ENCODE measurements at regions of chr1 and their contacts with region 1.

Region 1: GRCh38 chr1:226827968-226828513 is 42.4 kb upstream of the PSEN2 start:
- DNase-seq: peak; percentile 96
- H3K4me3 ChIP-seq: peak overlapping the region in 1 of 4 donors; percentile 19
- H3K27ac ChIP-seq: peak overlapping the region; percentile 77 to 86 (median 84)
- H3K4me1 ChIP-seq: peaks cover 8 to 17% (median 13%) of the 10 kb centered on the region in 4 donors
- H3K27me3 ChIP-seq: no peaks in the 10 kb centered on the region
- CTCF ChIP-seq: peak; percentile 93 to 98 (median 95)
- EP300 ChIP-seq: no peak
- POLR2A ChIP-seq: no peak

Region 2: DNA sequence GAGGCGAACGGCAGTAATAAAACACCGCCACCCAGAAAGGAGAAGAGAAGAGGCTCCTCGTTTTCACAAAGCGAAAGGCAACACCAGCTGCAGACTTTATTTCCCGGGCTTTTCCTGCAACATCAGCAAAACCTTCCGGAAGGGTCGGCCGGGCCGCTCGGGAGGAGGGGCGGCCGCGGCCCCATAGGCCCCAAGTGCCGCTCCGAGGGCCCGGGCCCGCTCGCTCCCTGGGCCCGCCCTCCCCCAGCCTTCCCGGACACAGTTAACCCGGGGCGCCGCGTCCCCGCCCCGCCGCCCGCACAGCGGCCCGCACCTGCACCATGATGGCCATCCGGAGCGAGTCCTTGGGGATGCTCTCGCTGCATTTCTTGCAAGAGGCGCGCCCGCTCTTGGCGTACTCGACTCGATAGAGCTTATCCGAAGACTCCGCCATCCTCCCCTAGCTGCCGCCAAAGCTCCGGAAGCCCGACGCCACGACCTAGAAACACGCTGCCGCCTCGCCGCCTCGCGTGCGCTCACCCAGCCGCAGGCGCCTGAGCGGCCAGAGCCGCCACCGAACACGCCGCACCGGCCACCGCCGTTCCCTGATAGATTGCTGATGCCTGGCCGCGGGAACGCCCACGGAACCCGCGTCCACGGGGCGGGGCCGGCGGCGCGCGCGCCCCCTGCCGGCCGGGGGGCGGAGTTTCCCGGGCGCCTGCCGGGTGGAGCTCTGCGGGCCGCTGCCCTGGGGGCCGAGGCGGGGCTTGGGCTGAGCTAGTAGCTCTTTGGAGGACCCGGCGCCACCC is 420.4 kb before region 1 on chr1 and contains the start of gene PARP1:
- in situ Hi-C with region 1: loop called in 2 of 4 experiments (anchors 25 kb)
- intact Hi-C with region 1: no loop called
- DNase-seq: peak; percentile 90
- H3K4me3 ChIP-seq: peak within 1 kb of the TSS; percentile 58 to 90 (median 76)
- H3K27ac ChIP-seq: peak within 1 kb of the TSS; percentile 85 to 95 (median 92)
- H3K4me1 ChIP-seq: peaks cover 17 to 45% (median 34%) of the 10 kb centered on the region in 4 donors
- H3K27me3 ChIP-seq: no peaks in the 10 kb centered on the region
- CTCF ChIP-seq: peak in 4 of 5 experiments; percentile 32 to 85 (median 74)
- EP300 ChIP-seq: no peak
- POLR2A ChIP-seq: peak; percentile 65
- total RNA-seq, gene PARP1: 23.2 to 74.4 (median 38.0) TPM

Region 3: DNA sequence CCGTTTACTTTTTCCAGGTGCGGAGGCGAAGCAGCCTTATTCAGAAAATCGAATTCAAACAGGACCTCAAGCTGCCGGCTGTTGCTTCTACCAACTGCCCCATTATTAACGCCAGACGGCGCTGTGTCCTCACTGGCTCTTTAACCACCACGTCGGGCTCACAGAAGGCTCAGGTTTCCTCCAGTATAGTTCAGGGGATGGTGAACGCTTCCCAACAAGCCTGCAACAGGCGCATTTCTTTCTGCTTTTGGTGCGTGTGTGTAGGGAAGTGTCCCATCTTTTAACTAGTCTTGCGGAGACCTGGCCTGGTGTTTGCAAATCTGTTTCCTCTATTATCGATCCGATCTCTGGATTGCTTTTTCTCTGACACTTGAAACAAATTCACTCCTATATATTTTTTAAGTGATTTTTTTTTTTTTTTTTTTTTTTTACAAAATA is 280.3 kb before region 1 on chr1:
- in situ Hi-C with region 1: no loop called
- intact Hi-C with region 1: loop called (anchors 5 kb)
- DNase-seq: peak; percentile 83
- H3K4me3 ChIP-seq: peak overlapping the region in 1 of 4 donors; percentile 65
- H3K27ac ChIP-seq: peak overlapping the region in 3 of 4 donors; percentile 17 to 81 (median 74)
- H3K4me1 ChIP-seq: peaks cover 8 to 52% (median 45%) of the 10 kb centered on the region in 4 donors
- H3K27me3 ChIP-seq: peaks cover 28% of the 10 kb centered on the region
- CTCF ChIP-seq: peak; percentile 76 to 91 (median 85)
- EP300 ChIP-seq: no peak
- POLR2A ChIP-seq: no peak

Region 4: DNA sequence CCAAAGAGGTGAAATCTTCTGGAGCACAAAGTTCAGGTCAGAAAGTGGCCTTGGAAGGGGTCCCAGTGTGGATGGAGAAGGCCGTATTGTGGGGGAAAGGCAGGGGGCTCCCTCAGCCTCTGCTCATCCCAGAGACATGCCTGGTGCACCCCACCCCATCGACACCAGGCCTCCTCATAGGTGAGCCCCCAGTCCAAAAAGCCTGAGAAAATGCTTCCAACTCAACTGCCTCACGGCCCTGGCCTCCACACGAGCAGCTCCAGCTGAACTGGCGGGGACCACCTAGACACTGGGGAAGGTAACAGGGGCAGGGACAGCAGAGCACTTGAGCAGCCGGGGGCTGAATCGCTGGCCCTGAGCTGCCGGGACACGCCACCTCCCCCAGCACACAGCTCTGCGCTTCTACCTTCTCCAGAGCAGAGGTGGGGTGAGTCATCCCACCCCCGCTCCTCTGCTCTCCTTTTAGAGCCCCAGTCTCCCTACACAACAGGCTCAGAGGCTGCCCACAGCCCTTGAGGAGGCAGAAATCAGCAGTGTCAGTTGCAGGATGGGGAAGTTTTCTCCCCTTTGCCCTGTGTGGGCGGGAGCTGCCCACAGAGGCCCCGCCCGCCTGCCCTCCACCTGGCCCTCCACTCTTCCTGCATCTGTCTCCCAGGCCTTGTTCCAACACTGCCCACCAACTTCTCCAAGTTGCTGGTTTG is 185.0 kb before region 1 on chr1:
- in situ Hi-C with region 1: loop called (anchors 5 to 10 kb)
- intact Hi-C with region 1: no loop called
- DNase-seq: no peak
- H3K4me3 ChIP-seq: no peak overlapping the region
- H3K27ac ChIP-seq: peak overlapping the region; percentile 11 to 67 (median 37)
- H3K4me1 ChIP-seq: peaks cover 24 to 42% (median 36%) of the 10 kb centered on the region in 4 donors
- H3K27me3 ChIP-seq: no peaks in the 10 kb centered on the region
- CTCF ChIP-seq: no peak
- EP300 ChIP-seq: no peak
- POLR2A ChIP-seq: no peak

Region 5: DNA sequence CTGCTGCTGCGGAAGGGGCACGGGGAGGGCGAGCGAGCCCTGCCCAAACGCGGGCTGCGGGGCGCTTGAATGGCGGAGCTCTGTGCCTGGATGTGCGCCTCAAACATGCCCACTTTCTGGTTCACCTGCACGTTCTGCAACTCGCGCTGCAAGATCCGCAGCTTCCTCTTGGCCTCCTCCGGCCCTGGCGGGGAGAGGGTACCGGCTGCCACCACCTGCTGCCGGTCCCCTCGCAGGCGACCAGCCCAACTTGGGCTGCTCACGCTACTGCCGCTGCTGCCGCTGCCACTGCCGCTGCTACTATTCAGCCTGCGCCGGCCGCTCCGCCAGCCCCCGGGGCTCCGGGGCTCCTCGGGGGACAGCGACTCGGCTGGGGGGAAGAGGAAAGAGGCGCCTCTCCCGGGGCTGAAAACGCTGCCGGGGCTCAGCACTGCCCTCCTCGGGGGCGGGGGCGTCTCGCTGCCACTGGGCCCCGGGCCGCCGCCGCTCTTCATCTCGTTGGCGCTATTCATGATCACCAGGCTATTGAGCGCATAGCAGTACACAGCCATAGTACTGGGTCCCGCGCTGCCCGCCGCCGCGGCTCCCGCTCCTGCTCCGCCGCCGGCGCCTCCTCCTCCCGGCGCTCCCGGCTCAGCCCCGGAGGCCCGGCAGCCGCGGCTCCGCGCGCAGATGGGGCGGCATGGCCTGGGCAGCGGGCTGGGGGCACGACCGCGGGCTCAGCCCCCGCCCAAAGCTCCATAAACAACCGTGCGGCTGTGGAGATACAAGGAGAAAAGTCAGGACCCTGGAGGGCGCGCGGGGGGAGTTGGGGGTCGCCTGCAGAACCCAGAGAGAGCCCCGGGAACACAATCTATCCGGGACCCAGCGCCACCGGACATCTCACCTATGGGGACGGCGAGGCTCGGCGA is 90.9 kb before region 1 on chr1:
- in situ Hi-C with region 1: loop called in 1 of 4 experiments (anchors 10 kb)
- intact Hi-C with region 1: loop called (anchors 2 kb)
- DNase-seq: peak; percentile 39
- H3K4me3 ChIP-seq: peak overlapping the region; percentile 66 to 96 (median 82)
- H3K27ac ChIP-seq: peak overlapping the region; percentile 90 to 97 (median 94)
- H3K4me1 ChIP-seq: peaks cover 10 to 51% (median 32%) of the 10 kb centered on the region in 4 donors
- H3K27me3 ChIP-seq: no peaks in the 10 kb centered on the region
- CTCF ChIP-seq: peak in 1 of 5 experiments; percentile 7
- EP300 ChIP-seq: no peak
- POLR2A ChIP-seq: no peak

Region 6: DNA sequence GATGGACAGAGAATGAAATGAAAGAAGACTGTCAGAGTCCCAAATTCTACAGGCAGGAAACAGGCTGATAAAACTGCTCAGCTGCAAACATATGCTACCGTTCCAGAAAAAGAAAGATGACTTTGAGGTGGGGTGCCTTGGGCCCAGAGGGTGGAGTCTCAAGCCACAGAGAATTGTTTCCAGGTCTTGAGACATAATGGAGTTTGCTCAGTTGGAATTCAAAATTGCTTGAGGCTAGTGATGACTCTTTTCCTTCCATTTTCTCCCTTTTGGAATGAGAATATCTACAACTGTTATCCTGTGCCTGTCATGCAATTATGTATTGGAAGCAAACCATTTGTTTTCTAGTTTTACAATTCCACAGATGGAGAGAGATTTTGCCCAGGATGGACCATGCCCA is 18.8 kb after region 1 on chr1:
- in situ Hi-C with region 1: no loop called
- intact Hi-C with region 1: no loop called
- DNase-seq: no peak
- H3K4me3 ChIP-seq: no peak overlapping the region
- H3K27ac ChIP-seq: no peak overlapping the region
- H3K4me1 ChIP-seq: no peaks in the 10 kb centered on the region
- H3K27me3 ChIP-seq: no peaks in the 10 kb centered on the region
- CTCF ChIP-seq: no peak
- EP300 ChIP-seq: no peak
- POLR2A ChIP-seq: no peak